ENCODE measurements at regions of chr12 and their contacts with region 1.

Region 1: DNA sequence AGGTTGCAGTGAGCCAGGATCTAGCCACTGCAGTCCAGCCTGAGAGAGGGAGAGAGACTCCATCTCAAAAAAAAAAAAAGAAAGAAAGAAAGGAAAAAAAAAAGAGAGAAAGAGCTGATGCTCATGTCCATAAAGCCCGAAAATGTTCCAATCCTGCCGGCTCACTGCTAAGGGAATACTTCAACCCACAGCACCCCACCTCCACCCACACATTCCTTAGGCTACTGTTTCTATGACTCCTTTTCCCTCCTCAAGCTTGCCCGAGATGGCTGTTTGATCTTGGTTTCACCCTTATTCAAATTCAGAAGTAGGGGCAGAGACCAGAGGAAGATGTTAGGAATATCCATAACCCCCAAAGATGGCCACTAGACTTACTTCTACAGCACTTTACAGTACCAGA is 59.5 kb upstream of the RASSF3 start:
- DNase-seq: no peak
- H3K4me3 Mint-ChIP-seq: no peak overlapping the region
- H3K27ac Mint-ChIP-seq: no peak overlapping the region
- H3K4me1 Mint-ChIP-seq: peaks cover 21% of the 10 kb centered on the region
- H3K27me3 Mint-ChIP-seq: no peaks in the 10 kb centered on the region
- CTCF ChIP-seq: no peak

Region 2: GRCh38 chr12:63940310-63941005 is 610.3 kb before region 1 on chr12:
- CTCF ChIA-PET with region 1: no interaction called
- intact Hi-C with region 1: no loop called
- DNase-seq: no peak
- H3K4me3 Mint-ChIP-seq: no peak overlapping the region
- H3K27ac Mint-ChIP-seq: no peak overlapping the region
- H3K4me1 Mint-ChIP-seq: no peaks in the 10 kb centered on the region
- H3K27me3 Mint-ChIP-seq: no peaks in the 10 kb centered on the region
- CTCF ChIP-seq: no peak

Region 3: DNA sequence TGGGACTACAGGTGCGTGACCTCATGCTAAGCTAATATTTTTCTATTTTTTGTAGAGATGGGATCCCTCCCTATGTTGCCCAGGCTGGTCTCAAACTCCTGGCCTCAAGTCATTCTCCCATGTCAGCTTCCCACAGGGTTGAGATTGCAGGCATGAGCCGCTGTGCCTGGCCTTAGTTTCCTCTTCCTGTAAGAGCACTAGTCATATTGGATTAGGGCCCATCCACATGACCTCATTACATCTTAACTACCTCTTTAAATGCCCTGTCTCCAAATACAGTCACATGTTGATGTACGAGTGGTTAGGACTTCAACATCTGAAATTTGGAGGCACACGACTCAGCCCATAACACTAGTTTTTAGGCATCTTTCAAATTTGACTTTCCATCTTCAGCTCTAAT is 12.6 kb before region 1 on chr12:
- CTCF ChIA-PET with region 1: interaction called, 10 read pairs
- intact Hi-C with region 1: no loop called
- DNase-seq: no peak
- H3K4me3 Mint-ChIP-seq: no peak overlapping the region
- H3K27ac Mint-ChIP-seq: no peak overlapping the region
- H3K4me1 Mint-ChIP-seq: no peaks in the 10 kb centered on the region
- H3K27me3 Mint-ChIP-seq: peaks cover 25% of the 10 kb centered on the region
- CTCF ChIP-seq: no peak

Region 4: DNA sequence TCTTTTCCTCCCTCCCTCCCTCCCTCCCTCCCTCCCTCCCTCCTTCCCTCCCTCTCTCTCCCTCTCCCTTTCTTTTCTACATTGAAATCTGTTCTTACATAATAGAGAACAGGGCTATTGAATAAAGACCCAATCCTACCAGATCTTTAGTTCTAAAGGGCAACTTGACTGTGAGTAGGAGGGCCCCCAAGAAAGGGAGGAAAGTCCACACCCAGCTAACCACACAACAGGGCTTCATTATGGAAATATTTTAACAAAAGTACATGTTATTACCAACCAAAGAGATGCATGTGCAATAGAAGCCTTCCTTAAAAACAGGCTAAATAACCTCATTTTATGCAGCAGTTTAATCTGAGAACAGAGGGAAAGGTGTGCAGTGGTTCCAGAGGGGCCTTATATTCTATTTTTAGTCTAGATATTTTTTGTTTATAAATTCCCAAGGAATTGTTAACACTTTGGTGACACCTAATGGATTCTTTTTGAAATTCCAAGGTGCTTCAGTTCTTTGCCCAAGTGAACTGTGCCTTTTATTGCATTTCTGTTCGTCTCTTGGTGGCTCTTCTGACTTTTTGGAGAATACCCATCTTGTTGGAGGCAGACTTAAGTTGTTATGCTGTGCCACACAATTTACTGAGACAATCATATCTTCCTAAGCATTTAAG is 145.5 kb after region 1 on chr12:
- CTCF ChIA-PET with region 1: interaction called, 23 read pairs
- intact Hi-C with region 1: loop called (anchors 1 kb)
- DNase-seq: no peak
- H3K4me3 Mint-ChIP-seq: no peak overlapping the region
- H3K27ac Mint-ChIP-seq: no peak overlapping the region
- H3K4me1 Mint-ChIP-seq: peaks cover 32% of the 10 kb centered on the region
- H3K27me3 Mint-ChIP-seq: no peaks in the 10 kb centered on the region
- CTCF ChIP-seq: peak; percentile 12

Measured in Calu3 (cell line).